ENCODE measurements at regions of chr11 and their contacts with region 1.

Region 1: DNA sequence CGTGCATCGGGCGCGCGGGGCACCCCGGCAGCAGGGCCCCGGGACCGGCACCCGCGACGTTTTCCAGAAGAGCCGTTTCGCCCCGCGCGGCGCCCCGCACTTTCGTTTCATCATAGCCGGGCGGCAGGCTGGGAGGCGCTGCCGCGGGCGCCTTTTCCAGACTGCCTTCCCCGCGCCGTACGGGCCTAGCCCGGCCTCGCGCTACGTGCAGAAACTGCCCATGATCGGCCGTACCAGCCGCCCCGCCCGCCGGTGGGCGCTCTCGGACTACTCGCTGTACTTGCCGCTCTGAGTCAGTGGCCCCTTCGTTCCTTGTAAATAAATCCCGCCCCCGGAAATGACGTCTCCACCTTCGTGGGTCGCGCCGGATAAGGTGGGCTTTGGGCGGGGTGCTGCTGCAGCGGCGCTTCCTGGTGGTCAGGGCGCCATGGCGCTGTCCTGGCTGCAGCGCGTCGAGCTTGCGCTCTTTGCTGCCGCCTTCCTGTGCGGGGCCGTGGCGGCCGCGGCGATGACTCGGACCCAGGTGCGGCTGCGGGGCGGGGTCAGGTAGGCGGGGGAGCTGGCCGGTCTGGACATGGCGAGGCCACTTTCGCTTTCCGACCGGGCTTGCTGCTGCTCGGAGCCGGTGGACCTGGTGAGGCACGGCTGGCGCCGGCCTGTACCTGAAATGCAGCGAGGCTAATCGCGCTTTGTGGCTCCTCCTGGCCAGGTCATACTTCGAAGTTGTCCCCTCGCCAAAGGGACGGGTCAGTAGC is at the start of gene TMEM179B:
- DNase-seq: peak; percentile 97 to 98 (median 97)
- H3K4me3 ChIP-seq: peak within 1 kb of the TSS; percentile 77 to 100 (median 84)
- H3K4me3 Mint-ChIP-seq: peak within 1 kb of the TSS; percentile 91 to 93
- H3K27ac ChIP-seq: peak within 1 kb of the TSS; percentile 83 to 98
- H3K27ac Mint-ChIP-seq: peak within 1 kb of the TSS; percentile 92 to 98 (median 96)
- H3K4me1 ChIP-seq: peaks cover 30 to 55% of the 10 kb centered on the region in 2 donors
- H3K4me1 Mint-ChIP-seq: peaks cover 46% of the 10 kb centered on the region
- H3K27me3 ChIP-seq: no peaks in the 10 kb centered on the region
- H3K27me3 Mint-ChIP-seq: no peaks in the 10 kb centered on the region
- CTCF ChIP-seq: peak; percentile 74
- polyA plus RNA-seq, gene TMEM179B: 95.8 to 236 (median 220) TPM

Region 2: DNA sequence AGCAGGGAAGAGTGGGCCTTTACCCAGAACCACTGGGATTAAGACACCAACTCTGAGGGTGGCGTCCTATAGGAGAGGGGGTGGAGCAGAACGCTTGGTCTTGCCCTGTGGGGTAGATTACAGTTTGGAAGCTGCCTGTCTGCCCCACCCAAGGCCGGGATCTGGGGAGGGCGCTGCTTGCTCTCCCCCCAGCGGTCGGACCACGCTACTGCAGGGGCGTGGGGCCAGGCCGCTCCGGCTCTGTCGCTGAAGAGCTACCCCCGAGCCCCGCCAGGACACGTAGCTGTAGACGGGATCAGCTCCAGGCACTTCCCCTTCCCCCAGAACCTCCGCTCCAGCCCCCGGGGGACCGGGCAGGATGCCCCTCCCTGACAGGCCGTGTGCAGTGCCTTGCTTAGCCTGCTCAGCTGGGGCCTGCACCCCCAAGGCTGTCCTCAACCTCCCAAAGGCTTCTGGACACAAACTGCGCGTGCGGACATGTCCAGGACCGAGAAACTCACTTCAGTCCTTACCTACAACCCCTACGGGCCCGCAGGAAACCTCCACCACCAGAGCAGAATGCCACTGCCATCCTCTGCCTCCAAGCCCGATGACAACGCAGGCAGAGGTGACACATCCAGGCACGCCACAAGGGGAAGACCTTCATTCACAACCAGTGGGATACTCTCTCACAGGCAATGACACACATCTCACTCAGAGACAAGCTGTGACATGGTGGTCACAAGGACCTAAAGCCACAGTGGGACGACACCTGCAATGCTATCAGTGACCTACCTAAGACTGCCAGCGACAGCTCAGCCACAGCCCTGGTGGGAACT is 244.2 kb before region 1 on chr11:
- intact Hi-C with region 1: no loop called
- DNase-seq: peak; percentile 88 to 97 (median 88)
- H3K4me3 ChIP-seq: peak overlapping the region; percentile 83 to 96 (median 87)
- H3K4me3 Mint-ChIP-seq: peak overlapping the region; percentile 96 to 98
- H3K27ac ChIP-seq: peak overlapping the region; percentile 82 to 99
- H3K27ac Mint-ChIP-seq: peak overlapping the region; percentile 93 to 100 (median 96)
- H3K4me1 ChIP-seq: peaks cover 79 to 80% of the 10 kb centered on the region in 2 donors
- H3K4me1 Mint-ChIP-seq: peaks cover 74% of the 10 kb centered on the region
- H3K27me3 ChIP-seq: no peaks in the 10 kb centered on the region
- H3K27me3 Mint-ChIP-seq: peaks cover 0 to 13% (median 4%) of the 10 kb centered on the region in 3 donors
- CTCF ChIP-seq: peak; percentile 100

Region 3: DNA sequence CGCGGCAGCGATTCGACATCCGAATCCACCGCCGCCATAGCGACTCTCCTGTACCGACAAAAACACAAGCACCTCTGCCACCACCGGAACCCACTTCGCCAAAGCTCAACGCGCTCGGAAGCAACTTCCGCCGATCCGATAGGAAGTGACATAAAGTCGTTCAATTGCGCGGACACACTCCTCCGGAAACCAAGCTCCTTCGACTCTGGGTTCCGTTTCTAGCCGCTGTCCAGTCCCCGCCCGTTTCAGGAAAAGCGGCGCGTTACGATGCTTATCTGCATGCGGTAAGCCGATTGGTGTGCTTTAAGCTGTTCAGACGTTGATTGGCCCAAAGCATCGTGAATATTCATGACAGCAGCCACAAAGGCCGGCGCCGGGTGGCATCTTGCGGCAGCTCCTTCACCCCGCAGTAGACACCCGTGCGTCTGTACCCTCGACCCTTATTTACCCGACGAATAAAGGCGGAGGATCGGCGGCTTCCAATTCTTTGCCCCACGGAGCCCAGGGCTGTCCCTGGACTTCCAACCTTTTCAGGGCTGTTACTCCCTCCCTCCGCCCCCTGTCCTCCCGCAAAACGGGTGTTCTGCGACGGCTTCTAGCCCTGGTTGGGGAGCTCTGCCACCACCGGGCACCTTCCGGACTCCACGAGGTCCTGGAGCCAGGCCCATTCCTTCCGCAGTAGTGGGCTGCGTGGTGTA is 195.6 kb before region 1 on chr11 and contains the start of gene TUT1:
- intact Hi-C with region 1: loop called in 1 of 2 experiments (anchors 10 kb)
- DNase-seq: peak; percentile 98 to 99 (median 99)
- H3K4me3 ChIP-seq: peak within 1 kb of the TSS; percentile 67 to 98 (median 82)
- H3K4me3 Mint-ChIP-seq: peak within 1 kb of the TSS; percentile 92 to 95
- H3K27ac ChIP-seq: peak within 1 kb of the TSS; percentile 91 to 96
- H3K27ac Mint-ChIP-seq: peak within 1 kb of the TSS; percentile 95 to 99 (median 98)
- H3K4me1 ChIP-seq: peaks cover 27 to 41% of the 10 kb centered on the region in 2 donors
- H3K4me1 Mint-ChIP-seq: peaks cover 33% of the 10 kb centered on the region
- H3K27me3 ChIP-seq: no peaks in the 10 kb centered on the region
- H3K27me3 Mint-ChIP-seq: peaks cover 0 to 2% (median 0%) of the 10 kb centered on the region in 3 donors
- CTCF ChIP-seq: peak; percentile 19
- polyA plus RNA-seq, gene TUT1: 1.8 to 16.3 (median 2.1) TPM

Region 4: GRCh38 chr11:62726915-62727763 is 60.0 kb before region 1 on chr11 and contains the start of gene HNRNPUL2:
- intact Hi-C with region 1: no loop called
- DNase-seq: peak; percentile 99
- H3K4me3 ChIP-seq: peak within 1 kb of the TSS; percentile 84 to 97 (median 91)
- H3K4me3 Mint-ChIP-seq: peak within 1 kb of the TSS; percentile 91 to 98
- H3K27ac ChIP-seq: peak within 1 kb of the TSS; percentile 88 to 91
- H3K27ac Mint-ChIP-seq: peak within 1 kb of the TSS; percentile 94 to 98 (median 98)
- H3K4me1 ChIP-seq: peaks cover 36 to 45% of the 10 kb centered on the region in 2 donors
- H3K4me1 Mint-ChIP-seq: peaks cover 47% of the 10 kb centered on the region
- H3K27me3 ChIP-seq: no peaks in the 10 kb centered on the region
- H3K27me3 Mint-ChIP-seq: no peaks in the 10 kb centered on the region
- CTCF ChIP-seq: no peak
- polyA plus RNA-seq, gene HNRNPUL2: 0.33 to 13.8 (median 0.88) TPM

Region 5: GRCh38 chr11:62757846-62758788 is 29.1 kb before region 1 on chr11:
- intact Hi-C with region 1: loop called in 1 of 2 experiments (anchors 1 kb)
- DNase-seq: no peak
- H3K4me3 ChIP-seq: no peak overlapping the region
- H3K4me3 Mint-ChIP-seq: no peak overlapping the region
- H3K27ac ChIP-seq: no peak overlapping the region
- H3K27ac Mint-ChIP-seq: peak overlapping the region in 1 of 7 donors; percentile 25
- H3K4me1 ChIP-seq: peaks cover 20 to 30% of the 10 kb centered on the region in 2 donors
- H3K4me1 Mint-ChIP-seq: peaks cover 21% of the 10 kb centered on the region
- H3K27me3 ChIP-seq: no peaks in the 10 kb centered on the region
- H3K27me3 Mint-ChIP-seq: peaks cover 1 to 3% (median 2%) of the 10 kb centered on the region in 3 donors
- CTCF ChIP-seq: no peak

Region 6: GRCh38 chr11:62831520-62832335 is 44.5 kb after region 1 on chr11 and contains the start of gene STX5:
- intact Hi-C with region 1: loop called (anchors 2 to 5 kb)
- DNase-seq: peak; percentile 97 to 99 (median 98)
- H3K4me3 ChIP-seq: peak within 1 kb of the TSS; percentile 69 to 96 (median 88)
- H3K4me3 Mint-ChIP-seq: peak within 1 kb of the TSS; percentile 97 to 98
- H3K27ac ChIP-seq: peak within 1 kb of the TSS; percentile 84 to 86
- H3K27ac Mint-ChIP-seq: peak within 1 kb of the TSS; percentile 99 to 100 (median 99)
- H3K4me1 ChIP-seq: peaks cover 24 to 31% of the 10 kb centered on the region in 2 donors
- H3K4me1 Mint-ChIP-seq: peaks cover 32% of the 10 kb centered on the region
- H3K27me3 ChIP-seq: no peaks in the 10 kb centered on the region
- H3K27me3 Mint-ChIP-seq: no peaks in the 10 kb centered on the region
- CTCF ChIP-seq: no peak
- polyA plus RNA-seq, gene STX5: 36.4 to 39.6 (median 38.5) TPM

Region 7: GRCh38 chr11:62855571-62856332 is 68.6 kb after region 1 on chr11:
- intact Hi-C with region 1: loop called (anchors 1 to 5 kb)
- DNase-seq: peak; percentile 97 to 99 (median 98)
- H3K4me3 ChIP-seq: peak overlapping the region; percentile 77 to 96 (median 94)
- H3K4me3 Mint-ChIP-seq: peak overlapping the region; percentile 91 to 98
- H3K27ac ChIP-seq: peak overlapping the region; percentile 11 to 81
- H3K27ac Mint-ChIP-seq: peak overlapping the region; percentile 88 to 94 (median 90)
- H3K4me1 ChIP-seq: peaks cover 34 to 45% of the 10 kb centered on the region in 2 donors
- H3K4me1 Mint-ChIP-seq: peaks cover 48% of the 10 kb centered on the region
- H3K27me3 ChIP-seq: no peaks in the 10 kb centered on the region
- H3K27me3 Mint-ChIP-seq: no peaks in the 10 kb centered on the region
- CTCF ChIP-seq: no peak

Region 8: DNA sequence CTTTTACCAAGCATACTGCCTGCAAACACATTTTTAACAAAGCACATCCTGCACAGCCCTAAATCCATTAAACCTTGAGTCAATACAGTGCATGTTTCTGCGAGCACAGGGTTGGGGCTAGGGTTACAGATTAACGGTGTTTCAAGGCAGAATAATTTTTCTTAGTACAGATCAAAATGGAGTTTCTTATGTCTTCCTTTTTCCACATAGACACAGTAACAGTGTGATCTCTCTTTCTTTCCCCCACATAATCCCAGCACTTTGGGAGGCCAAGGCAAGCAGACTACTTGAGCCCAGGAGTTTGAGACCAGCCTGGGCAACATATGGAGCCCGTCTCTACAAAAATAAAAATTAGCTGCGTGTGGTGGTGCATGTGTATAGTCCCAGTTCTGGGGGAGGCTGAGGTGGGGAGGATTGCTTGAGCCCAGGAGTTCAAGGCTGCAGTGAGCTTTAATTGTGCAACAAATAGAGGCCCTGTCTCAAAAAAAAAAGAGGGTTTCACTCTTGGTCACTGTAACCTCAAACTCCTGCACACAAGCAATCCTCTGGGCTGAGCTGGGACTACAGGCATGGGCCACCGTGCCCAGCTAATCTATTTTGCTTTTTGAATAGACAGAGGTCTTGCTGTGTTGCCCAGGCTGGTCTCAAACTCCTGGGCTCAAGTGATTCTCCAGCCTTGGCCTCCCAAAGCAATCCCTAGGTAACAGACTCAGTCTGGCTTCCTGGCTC is 73.8 kb after region 1 on chr11:
- intact Hi-C with region 1: loop called (anchors 2 to 5 kb)
- DNase-seq: no peak
- H3K4me3 ChIP-seq: no peak overlapping the region
- H3K4me3 Mint-ChIP-seq: no peak overlapping the region
- H3K27ac ChIP-seq: no peak overlapping the region
- H3K27ac Mint-ChIP-seq: peak overlapping the region in 2 of 7 donors; percentile 37 to 61
- H3K4me1 ChIP-seq: peaks cover 14 to 19% of the 10 kb centered on the region in 2 donors
- H3K4me1 Mint-ChIP-seq: peaks cover 25% of the 10 kb centered on the region
- H3K27me3 ChIP-seq: no peaks in the 10 kb centered on the region
- H3K27me3 Mint-ChIP-seq: no peaks in the 10 kb centered on the region
- CTCF ChIP-seq: no peak

Region 9: DNA sequence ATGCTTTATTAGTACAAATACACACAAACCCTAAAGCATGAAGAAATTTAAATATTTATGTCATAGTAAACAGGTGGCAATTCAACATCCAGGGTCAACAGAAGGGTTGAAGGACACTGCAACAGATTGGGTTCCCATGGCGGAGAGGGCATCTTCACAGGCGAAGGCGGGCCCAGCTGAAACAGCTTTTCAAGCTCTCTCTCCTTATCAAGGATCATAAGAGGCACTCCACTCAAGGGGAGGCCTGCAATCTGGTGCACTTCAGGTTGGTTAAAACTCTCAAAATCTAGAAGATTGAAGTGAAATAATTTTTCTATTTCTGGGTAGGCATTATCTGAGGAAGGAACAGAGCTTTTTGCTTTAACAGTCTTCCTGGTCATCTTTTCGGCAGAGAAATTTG is 245.3 kb after region 1 on chr11:
- intact Hi-C with region 1: no loop called
- DNase-seq: no peak
- H3K4me3 ChIP-seq: no peak overlapping the region
- H3K4me3 Mint-ChIP-seq: no peak overlapping the region
- H3K27ac ChIP-seq: no peak overlapping the region
- H3K27ac Mint-ChIP-seq: no peak overlapping the region
- H3K4me1 ChIP-seq: no peaks in the 10 kb centered on the region
- H3K4me1 Mint-ChIP-seq: peaks cover 2% of the 10 kb centered on the region
- H3K27me3 ChIP-seq: peaks cover 2 to 6% of the 10 kb centered on the region in 2 donors
- H3K27me3 Mint-ChIP-seq: peaks cover 7 to 15% (median 9%) of the 10 kb centered on the region in 3 donors
- CTCF ChIP-seq: no peak